Dendritic cell treated with granulocyte-macrophage colony-stimulating factor and Interleukin-4, amounts not matched to agents 40 ng/mL and 50 ng/mL, for 4 days (primary cell): ENCODE measurements at regions of chr5 and their contacts with region 1.

Region 1: GRCh38 chr5:115625579-115626444 is at the start of gene TMED7:
- H3K4me3 Mint-ChIP-seq: no peak within 1 kb of the TSS
- H3K27ac Mint-ChIP-seq: no peak within 1 kb of the TSS
- H3K4me1 Mint-ChIP-seq: peaks cover 19% of the 10 kb centered on the region
- H3K27me3 Mint-ChIP-seq: no peaks in the 10 kb centered on the region

Region 2: GRCh38 chr5:115170134-115170928 is 455.5 kb before region 1 on chr5:
- intact Hi-C with region 1: no loop called
- H3K4me3 Mint-ChIP-seq: peak overlapping the region; percentile 95
- H3K27ac Mint-ChIP-seq: peak overlapping the region; percentile 96
- H3K4me1 Mint-ChIP-seq: peaks cover 49% of the 10 kb centered on the region
- H3K27me3 Mint-ChIP-seq: peaks cover 45% of the 10 kb centered on the region

Region 3: GRCh38 chr5:115494570-115495289 is 131.1 kb before region 1 on chr5:
- intact Hi-C with region 1: no loop called
- H3K4me3 Mint-ChIP-seq: no peak overlapping the region
- H3K27ac Mint-ChIP-seq: no peak overlapping the region
- H3K4me1 Mint-ChIP-seq: peaks cover 22% of the 10 kb centered on the region
- H3K27me3 Mint-ChIP-seq: peaks cover 6% of the 10 kb centered on the region

Region 4: DNA sequence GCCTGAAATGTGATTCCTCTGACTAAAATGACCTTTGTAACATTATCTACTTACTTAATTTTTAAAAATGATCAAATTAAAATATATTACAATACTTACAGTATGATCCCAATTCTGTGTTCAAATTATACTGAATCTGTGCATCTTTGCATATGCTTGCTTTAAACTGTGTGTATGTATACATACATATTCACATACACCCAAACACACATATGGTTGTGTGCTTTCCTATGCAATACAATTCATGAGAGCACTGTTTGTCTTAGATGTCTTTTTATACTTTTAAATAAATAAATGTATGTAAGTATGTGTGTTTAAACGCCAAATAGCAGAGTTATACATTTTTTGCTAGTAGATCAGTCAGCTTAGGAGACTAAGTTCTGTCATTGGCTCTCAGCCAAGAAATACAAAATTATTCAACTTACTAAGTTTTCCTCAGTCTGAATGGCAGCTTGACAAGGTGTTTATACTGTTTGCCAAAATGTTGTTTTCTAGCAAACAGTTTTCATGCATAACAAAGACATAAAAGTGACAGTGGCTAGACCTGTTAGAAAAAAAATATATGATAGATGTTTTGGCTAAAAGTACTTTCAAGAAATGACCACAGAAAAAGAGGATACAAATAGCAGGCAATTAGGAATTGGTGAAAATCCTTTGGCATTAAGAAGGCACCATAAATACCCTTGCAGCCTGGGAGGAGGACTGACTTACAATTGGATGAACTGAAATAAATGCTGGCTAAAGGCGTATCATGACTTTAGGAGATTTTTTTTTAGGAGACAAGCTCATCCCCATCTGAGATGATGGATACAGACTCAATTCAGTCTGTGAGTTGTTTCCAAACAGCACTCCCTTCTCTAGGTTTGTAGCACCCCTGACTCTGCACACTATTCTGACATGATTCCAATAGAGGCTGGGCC is 31.4 kb before region 1 on chr5:
- intact Hi-C with region 1: loop called (anchors 5 kb)
- H3K4me3 Mint-ChIP-seq: no peak overlapping the region
- H3K27ac Mint-ChIP-seq: no peak overlapping the region
- H3K4me1 Mint-ChIP-seq: peaks cover 56% of the 10 kb centered on the region
- H3K27me3 Mint-ChIP-seq: no peaks in the 10 kb centered on the region

Region 5: GRCh38 chr5:115601701-115602590 is 23.9 kb before region 1 on chr5 and contains the start of gene TICAM2:
- intact Hi-C with region 1: loop called (anchors 2 kb)
- H3K4me3 Mint-ChIP-seq: peak within 1 kb of the TSS; percentile 83
- H3K27ac Mint-ChIP-seq: peak within 1 kb of the TSS; percentile 94
- H3K4me1 Mint-ChIP-seq: peaks cover 59% of the 10 kb centered on the region
- H3K27me3 Mint-ChIP-seq: no peaks in the 10 kb centered on the region

Region 6: DNA sequence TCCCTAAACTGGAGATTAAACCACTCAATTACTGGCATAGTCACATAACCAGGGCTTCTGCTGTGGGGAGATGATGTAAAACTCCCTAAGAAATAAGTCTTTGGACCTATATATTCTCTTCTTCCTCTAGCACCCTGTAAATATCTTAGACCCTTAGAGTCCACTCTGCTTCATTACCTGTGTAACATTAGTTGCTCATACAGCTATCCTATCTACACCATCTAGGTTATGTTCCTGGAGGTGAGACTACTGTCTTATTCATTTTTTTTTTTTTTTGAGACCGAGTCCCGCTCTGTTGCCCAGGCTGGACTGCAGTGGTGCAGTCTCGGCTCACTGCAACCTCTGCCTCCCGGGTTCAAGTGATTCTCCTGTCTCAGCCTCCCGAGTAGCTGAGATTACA is 13.9 kb before region 1 on chr5:
- intact Hi-C with region 1: loop called (anchors 2 kb)
- H3K4me3 Mint-ChIP-seq: no peak overlapping the region
- H3K27ac Mint-ChIP-seq: no peak overlapping the region
- H3K4me1 Mint-ChIP-seq: peaks cover 6% of the 10 kb centered on the region
- H3K27me3 Mint-ChIP-seq: no peaks in the 10 kb centered on the region

Region 7: GRCh38 chr5:115686051-115686737 is 60.4 kb after region 1 on chr5:
- intact Hi-C with region 1: no loop called
- H3K4me3 Mint-ChIP-seq: no peak overlapping the region
- H3K27ac Mint-ChIP-seq: no peak overlapping the region
- H3K4me1 Mint-ChIP-seq: no peaks in the 10 kb centered on the region
- H3K27me3 Mint-ChIP-seq: no peaks in the 10 kb centered on the region

Region 8: GRCh38 chr5:115749016-115749415 is 123.2 kb after region 1 on chr5:
- intact Hi-C with region 1: no loop called
- H3K4me3 Mint-ChIP-seq: no peak overlapping the region
- H3K27ac Mint-ChIP-seq: no peak overlapping the region
- H3K4me1 Mint-ChIP-seq: no peaks in the 10 kb centered on the region
- H3K27me3 Mint-ChIP-seq: no peaks in the 10 kb centered on the region